Mammary epithelial cell (primary cell): ENCODE measurements at regions of chr4 and their contacts with region 1.

Region 1: DNA sequence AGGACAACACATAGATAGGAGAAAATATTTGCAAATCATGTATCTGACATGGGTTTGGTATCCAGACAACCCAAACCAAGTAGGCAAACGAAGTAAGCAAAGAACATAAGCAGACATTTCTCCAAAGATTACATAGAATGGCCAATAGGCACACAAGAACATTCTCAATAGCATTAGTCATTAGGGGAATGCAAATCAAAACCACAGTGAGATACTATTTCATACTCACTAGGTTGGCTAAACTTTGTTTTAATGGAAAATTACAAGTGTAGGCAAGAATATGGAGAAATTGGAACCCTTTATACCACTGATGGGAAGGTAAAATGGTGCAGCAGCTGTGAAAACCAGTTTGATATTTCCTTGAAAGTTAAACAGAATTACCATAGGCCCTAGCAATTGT is 74.7 kb downstream of the CHRNA9 start:
- DNase-seq: peak; percentile 56
- H3K4me3 ChIP-seq: no peak overlapping the region
- H3K27ac ChIP-seq: no peak overlapping the region
- H3K4me1 ChIP-seq: peaks cover under 1% of the 10 kb centered on the region
- H3K27me3 ChIP-seq: no peaks in the 10 kb centered on the region
- CTCF ChIP-seq: no peak

Region 2: GRCh38 chr4:40280586-40280985 is 129.2 kb before region 1 on chr4:
- CTCF ChIA-PET with region 1: no interaction called
- dilution Hi-C with region 1: no loop called
- in situ Hi-C with region 1: no loop called
- intact Hi-C with region 1: no loop called
- DNase-seq: peak; percentile 20
- H3K4me3 ChIP-seq: no peak overlapping the region
- H3K27ac ChIP-seq: no peak overlapping the region
- H3K4me1 ChIP-seq: no peaks in the 10 kb centered on the region
- H3K27me3 ChIP-seq: no peaks in the 10 kb centered on the region
- CTCF ChIP-seq: no peak

Region 3: GRCh38 chr4:40629401-40630334 is 219.8 kb after region 1 on chr4 and contains the start of gene RBM47:
- CTCF ChIA-PET with region 1: no interaction called
- dilution Hi-C with region 1: no loop called
- in situ Hi-C with region 1: no loop called
- intact Hi-C with region 1: loop called (anchors 10 kb)
- DNase-seq: peak; percentile 78
- H3K4me3 ChIP-seq: peak within 1 kb of the TSS; percentile 63 to 75 (median 68)
- H3K27ac ChIP-seq: peak within 1 kb of the TSS; percentile 54
- H3K4me1 ChIP-seq: no peaks in the 10 kb centered on the region
- H3K27me3 ChIP-seq: no peaks in the 10 kb centered on the region
- CTCF ChIP-seq: peak in 1 of 2 donors; percentile 21
- total RNA-seq, gene RBM47: 0.45 to 3.0 TPM

Region 4: GRCh38 chr4:40811956-40812355 is 402.1 kb after region 1 on chr4:
- CTCF ChIA-PET with region 1: no interaction called
- dilution Hi-C with region 1: no loop called
- in situ Hi-C with region 1: no loop called
- intact Hi-C with region 1: no loop called
- DNase-seq: no peak
- H3K4me3 ChIP-seq: no peak overlapping the region
- H3K27ac ChIP-seq: no peak overlapping the region
- H3K4me1 ChIP-seq: no peaks in the 10 kb centered on the region
- H3K27me3 ChIP-seq: no peaks in the 10 kb centered on the region
- CTCF ChIP-seq: no peak